Calu3 (cell line): ENCODE measurements at regions of chr15 and their contacts with region 1.

Region 1: DNA sequence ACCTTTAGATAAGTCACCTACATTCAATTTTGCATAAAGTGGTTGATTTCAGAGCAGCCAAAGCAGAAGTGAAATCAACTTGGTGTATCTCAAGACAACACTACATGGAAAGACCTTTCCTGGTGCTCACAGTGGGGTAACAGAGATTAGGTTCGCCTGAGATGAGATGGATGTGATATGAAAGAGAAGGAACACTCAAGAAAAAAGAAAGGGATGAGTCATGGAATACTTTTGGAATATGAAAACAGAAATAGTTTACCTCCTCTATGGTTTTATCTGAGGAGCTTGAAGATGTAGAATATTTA is 53.4 kb upstream of the AP4E1 start:
- DNase-seq: no peak
- H3K4me3 Mint-ChIP-seq: no peak overlapping the region
- H3K27ac Mint-ChIP-seq: no peak overlapping the region
- H3K4me1 Mint-ChIP-seq: no peaks in the 10 kb centered on the region
- H3K27me3 Mint-ChIP-seq: no peaks in the 10 kb centered on the region
- CTCF ChIP-seq: no peak

Region 2: GRCh38 chr15:50476143-50476542 is 378.9 kb before region 1 on chr15:
- CTCF ChIA-PET with region 1: no interaction called
- intact Hi-C with region 1: loop called (anchors 5 kb)
- DNase-seq: no peak
- H3K4me3 Mint-ChIP-seq: no peak overlapping the region
- H3K27ac Mint-ChIP-seq: no peak overlapping the region
- H3K4me1 Mint-ChIP-seq: no peaks in the 10 kb centered on the region
- H3K27me3 Mint-ChIP-seq: no peaks in the 10 kb centered on the region
- CTCF ChIP-seq: no peak